Activated CD4-positive, alpha-beta T cell treated with anti-CD3 and anti-CD28 coated beads for 36 hours (primary cell): ENCODE measurements at regions of chr3 and their contacts with region 1.

Region 1: GRCh38 chr3:122299872-122300460 is 25.1 kb upstream of the CSTA start:
- DNase-seq: peak; percentile 53
- ATAC-seq: peak; percentile 59
- H3K4me3 Mint-ChIP-seq: no peak overlapping the region
- H3K27ac Mint-ChIP-seq: no peak overlapping the region
- H3K4me1 Mint-ChIP-seq: peaks cover 18% of the 10 kb centered on the region
- H3K27me3 Mint-ChIP-seq: no peaks in the 10 kb centered on the region

Region 2: GRCh38 chr3:121883507-121883906 is 416.5 kb before region 1 on chr3:
- CTCF ChIA-PET with region 1: interaction called, 4 read pairs
- POLR2A ChIA-PET with region 1: no interaction called
- intact Hi-C with region 1: loop called in 1 of 2 experiments (anchors 5 kb)
- DNase-seq: peak; percentile 5
- ATAC-seq: peak; percentile 60
- H3K4me3 Mint-ChIP-seq: no peak overlapping the region
- H3K27ac Mint-ChIP-seq: no peak overlapping the region
- H3K4me1 Mint-ChIP-seq: no peaks in the 10 kb centered on the region
- H3K27me3 Mint-ChIP-seq: no peaks in the 10 kb centered on the region